ENCODE measurements at regions of chr12 and their contacts with region 1.

Region 1: DNA sequence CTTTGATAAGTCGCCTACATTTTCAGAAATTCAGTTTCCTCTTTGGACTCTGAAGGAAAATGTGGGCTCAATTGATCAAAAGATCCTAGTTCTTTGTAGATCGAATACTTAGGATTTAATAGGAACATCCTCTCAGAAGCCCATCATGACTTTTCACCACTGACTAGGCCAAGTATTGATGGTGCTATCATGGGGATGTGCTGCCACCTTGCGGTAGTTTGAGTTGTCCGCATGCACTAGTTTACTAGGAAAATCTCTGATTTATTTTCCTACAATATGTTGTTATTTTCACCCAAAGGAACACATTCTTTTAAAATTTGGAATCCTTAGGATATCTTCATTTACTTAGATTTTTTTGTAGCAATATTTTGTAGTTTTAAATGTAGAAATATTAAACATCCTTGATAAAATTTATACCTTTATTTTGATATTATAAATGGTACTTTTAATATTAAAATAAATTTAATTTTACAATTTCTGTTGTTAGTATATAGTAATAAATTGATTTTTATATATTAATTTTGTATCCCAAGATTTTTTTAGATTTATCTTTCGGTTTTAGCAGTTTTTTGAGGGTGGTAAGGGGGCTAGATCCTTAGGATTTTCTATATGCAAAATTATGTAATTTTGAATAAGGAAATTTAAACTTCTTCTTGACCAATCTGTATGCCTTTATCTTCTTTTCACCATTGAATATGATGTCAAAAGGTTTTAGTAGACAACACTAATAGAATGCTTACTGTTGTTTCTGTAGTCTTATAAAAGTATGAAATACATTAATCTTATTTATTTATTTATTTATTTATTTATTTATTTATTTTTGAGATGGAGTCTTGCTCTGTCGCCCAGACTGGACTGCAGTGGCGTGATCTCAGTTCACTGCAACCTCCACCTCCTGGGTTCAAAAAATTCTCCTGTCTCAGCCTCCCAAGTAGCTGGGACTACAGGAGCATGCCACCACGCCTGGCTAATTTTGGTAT is 52.9 kb upstream of the OR9K2 start:
- DNase-seq: peak; percentile 73
- ATAC-seq: peak; percentile 65

Region 2: GRCh38 chr12:53251477-53252348 is 1821.6 kb before region 1 on chr12:
- intact Hi-C with region 1: no loop called
- DNase-seq: peak; percentile 89
- ATAC-seq: peak; percentile 94

Region 3: DNA sequence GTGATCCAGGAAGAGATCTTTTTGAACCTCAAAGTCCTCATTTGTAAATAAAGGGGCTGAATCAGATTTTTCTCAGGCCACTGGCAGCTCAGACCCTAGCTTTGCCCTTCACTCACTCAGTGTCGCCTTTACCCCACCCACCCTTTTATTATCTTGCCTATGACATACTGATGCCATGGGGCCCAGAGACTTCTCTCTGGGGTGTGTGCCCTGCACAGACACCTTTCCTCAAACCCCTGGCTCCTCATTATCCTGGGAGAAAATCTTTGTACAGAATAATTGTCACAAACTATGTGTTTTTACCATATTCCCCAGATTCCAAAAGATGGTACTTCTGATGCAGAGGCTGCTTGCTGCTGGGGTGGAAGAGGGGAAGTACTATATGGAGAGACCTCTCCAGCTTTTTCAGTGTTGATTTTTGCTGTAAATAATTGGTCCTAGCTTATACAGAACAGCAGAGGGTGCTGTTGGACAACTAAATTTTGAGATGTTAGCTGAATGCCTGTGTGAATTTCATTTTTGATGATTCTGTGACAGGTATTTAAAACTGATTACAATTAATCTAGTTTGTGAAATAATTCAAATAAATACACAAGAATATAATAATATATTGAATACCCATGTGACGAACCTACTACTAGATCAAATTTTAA is 371.3 kb before region 1 on chr12:
- intact Hi-C with region 1: loop called (anchors 5 kb)
- DNase-seq: no peak
- ATAC-seq: no peak

Region 4: DNA sequence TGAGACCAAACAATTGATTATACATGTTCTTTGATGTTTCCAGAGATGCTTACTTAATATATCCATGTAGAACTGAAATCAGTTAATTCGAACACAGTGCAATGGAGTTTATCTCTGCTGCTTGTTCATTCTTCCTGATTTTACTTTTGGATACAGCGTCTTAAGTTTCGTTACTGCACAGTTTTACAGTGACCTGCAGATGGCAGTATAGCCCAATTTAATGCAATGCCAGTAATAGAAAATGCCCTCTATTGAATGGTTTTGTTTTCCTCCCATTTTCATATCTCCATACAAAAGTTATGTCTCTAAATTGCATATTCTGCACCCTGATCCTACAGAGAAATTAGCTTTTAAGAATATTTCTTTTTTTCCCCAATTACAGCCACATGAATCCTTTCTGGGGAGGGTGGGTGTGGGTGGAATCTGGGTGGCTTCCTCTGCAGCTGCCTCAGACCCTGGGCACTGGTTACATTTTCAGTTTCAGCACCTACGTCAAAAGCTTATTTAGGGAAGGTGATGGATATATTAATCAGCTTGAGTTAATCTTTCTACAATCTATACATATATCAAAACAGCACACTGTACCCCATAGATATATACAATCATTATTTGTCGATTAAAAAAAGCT is 324.0 kb before region 1 on chr12:
- intact Hi-C with region 1: loop called (anchors 2 kb)
- DNase-seq: no peak
- ATAC-seq: no peak

Region 5: GRCh38 chr12:54941659-54942058 is 131.7 kb before region 1 on chr12:
- intact Hi-C with region 1: no loop called
- DNase-seq: no peak
- ATAC-seq: no peak

Region 6: DNA sequence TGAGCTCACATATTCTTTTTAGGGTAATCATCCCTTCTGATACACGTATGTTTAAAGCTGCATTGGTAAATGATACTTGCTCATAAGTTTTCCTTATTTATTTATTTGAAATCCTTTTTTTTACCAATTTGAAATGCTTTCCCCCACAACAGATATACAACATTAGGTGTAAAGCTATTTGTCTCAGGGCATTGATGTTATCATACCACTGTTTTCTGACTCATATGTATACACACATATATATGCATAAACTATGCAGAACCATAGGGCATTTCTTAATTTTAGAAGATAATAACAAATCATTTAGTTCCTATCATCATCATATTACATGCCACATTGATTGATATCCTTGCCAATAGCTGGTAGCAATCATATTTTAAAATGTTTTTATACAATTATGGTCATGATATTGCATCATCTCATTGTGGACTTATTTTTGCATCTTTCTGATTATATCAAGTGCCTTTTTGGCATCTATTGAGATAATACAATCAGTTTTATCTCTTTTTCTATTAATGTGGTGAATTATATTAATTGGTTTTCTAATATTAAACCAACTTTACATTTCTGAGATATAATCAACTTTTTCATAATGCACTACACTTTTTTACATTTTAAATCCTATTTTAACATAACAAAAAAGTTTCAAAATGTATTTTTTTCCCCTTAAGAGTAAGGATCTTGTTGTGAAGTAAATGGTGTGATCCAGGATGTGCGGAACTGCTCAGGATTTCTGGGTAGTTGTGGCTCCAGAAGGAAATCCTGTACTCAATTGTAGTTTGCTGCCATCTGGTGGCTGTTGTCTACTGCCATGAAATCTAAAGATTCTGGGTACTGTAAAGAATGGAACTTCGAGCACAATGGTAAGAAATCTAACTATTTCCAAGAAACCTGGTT is 69.6 kb after region 1 on chr12:
- intact Hi-C with region 1: no loop called
- DNase-seq: no peak
- ATAC-seq: no peak